Activated naive CD4-positive, alpha-beta T cell treated with anti-CD3 and anti-CD28 coated beads for 36 hours (primary cell): ENCODE measurements at regions of chr2 and their contacts with region 1.

Region 1: GRCh38 chr2:23351388-23352141 is 33.4 kb upstream of the KLHL29 start:
- DNase-seq: peak; percentile 78
- H3K4me3 Mint-ChIP-seq: no peak overlapping the region
- H3K27ac Mint-ChIP-seq: no peak overlapping the region
- H3K4me1 Mint-ChIP-seq: no peaks in the 10 kb centered on the region
- H3K27me3 Mint-ChIP-seq: peaks cover 25% of the 10 kb centered on the region

Region 2: DNA sequence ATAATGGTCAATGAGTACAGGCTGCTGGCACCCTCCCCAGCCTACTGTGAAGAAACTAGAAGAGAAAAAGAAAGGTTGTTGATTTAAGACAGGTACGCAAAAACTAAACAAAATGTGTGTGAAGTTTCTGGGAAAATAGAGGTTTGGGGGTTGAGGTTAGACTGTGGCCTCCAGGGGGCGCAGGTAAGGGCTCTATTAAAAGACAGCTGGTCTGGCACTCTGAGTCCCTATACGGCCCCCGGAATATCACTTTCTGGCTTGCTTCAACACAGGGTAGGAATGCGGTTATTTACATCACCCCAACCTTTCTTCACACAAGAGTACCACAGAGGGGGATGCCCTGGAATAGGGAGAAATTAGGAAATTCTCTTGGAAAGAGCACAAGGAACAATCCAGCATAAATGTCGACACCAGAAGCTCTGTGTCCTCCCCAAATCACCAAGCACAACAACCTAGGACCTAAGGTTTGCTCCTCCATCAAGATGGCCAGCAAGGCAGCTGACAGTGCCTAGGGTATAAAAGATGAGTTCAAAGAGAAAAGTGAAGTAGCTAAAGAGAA is 447.4 kb before region 1 on chr2:
- CTCF ChIA-PET with region 1: no interaction called
- intact Hi-C with region 1: loop called (anchors 5 kb)
- DNase-seq: peak; percentile 30
- H3K4me3 Mint-ChIP-seq: no peak overlapping the region
- H3K27ac Mint-ChIP-seq: no peak overlapping the region
- H3K4me1 Mint-ChIP-seq: no peaks in the 10 kb centered on the region
- H3K27me3 Mint-ChIP-seq: peaks cover 5% of the 10 kb centered on the region

Region 3: GRCh38 chr2:23002234-23002633 is 349.3 kb before region 1 on chr2:
- CTCF ChIA-PET with region 1: no interaction called
- intact Hi-C with region 1: no loop called
- DNase-seq: no peak
- H3K4me3 Mint-ChIP-seq: no peak overlapping the region
- H3K27ac Mint-ChIP-seq: no peak overlapping the region
- H3K4me1 Mint-ChIP-seq: no peaks in the 10 kb centered on the region
- H3K27me3 Mint-ChIP-seq: peaks cover 5% of the 10 kb centered on the region

Region 4: GRCh38 chr2:23199115-23199918 is 152.2 kb before region 1 on chr2:
- CTCF ChIA-PET with region 1: no interaction called
- intact Hi-C with region 1: loop called (anchors 1 kb)
- DNase-seq: no peak
- H3K4me3 Mint-ChIP-seq: no peak overlapping the region
- H3K27ac Mint-ChIP-seq: no peak overlapping the region
- H3K4me1 Mint-ChIP-seq: no peaks in the 10 kb centered on the region
- H3K27me3 Mint-ChIP-seq: peaks cover 9% of the 10 kb centered on the region

Region 5: DNA sequence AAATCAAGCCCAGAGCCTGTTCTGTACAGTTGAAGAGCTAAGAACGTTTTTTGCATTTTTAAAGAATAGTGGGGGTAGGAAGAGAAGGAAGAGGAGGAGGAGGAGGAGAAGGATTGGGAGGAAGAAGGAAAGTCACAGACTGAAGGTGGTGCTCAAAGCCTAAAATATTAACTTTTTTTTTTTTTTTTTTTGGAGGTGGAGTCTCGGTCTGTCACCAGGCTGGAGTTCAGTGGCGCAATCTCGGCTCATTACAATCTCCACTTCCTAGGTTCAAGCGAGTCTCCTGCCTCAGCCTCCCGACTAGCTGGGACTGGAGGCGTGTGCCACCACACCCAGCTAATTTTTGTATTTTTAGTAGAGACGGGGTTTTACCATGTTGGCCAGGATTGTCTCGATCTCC is 15.2 kb after region 1 on chr2:
- CTCF ChIA-PET with region 1: interaction called, 12 read pairs
- intact Hi-C with region 1: no loop called
- DNase-seq: no peak
- H3K4me3 Mint-ChIP-seq: no peak overlapping the region
- H3K27ac Mint-ChIP-seq: no peak overlapping the region
- H3K4me1 Mint-ChIP-seq: peaks cover 2% of the 10 kb centered on the region
- H3K27me3 Mint-ChIP-seq: peaks cover 20% of the 10 kb centered on the region